ENCODE measurements at regions of chr15 and their contacts with region 1.

Region 1: DNA sequence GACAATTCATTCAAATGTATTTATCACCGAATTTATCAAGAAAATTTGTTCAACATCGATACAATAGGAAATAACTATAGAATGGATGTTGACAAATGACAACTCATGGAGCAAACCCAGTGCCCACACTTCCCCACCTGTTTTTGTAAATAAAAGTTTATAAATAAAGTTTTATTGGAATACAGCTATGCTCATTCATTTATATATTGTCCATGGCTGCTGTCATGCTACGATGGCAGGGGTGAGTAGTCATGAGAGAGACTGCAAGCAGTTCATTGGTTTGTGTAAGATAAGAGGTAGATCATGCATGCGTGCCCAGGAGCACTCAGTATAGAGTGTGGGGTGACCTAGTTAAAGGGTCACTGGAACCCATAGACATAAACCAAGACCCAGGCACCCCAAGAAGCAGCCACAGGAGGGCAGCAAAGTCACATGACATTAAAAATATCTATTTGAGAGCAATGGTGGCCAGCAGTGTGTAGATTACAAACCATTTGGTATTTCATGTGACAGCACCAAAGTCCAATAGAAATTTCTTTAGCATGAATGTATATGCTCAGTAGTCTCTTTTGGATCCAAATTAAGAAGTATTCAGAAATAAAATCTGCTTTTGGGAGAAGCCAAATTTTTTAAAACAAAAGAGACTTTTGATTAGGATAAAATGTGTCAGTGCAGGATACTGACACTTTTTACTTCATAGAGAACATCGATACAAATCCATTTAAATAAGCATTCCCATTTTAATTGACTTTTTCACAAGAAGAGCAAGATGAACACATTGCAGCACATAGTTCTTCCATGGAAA is 794.8 kb downstream of the MCTP2 start:
- DNase-seq: peak; percentile 33
- H3K4me3 ChIP-seq: no peak overlapping the region
- H3K27ac ChIP-seq: no peak overlapping the region
- H3K27me3 ChIP-seq: no peaks in the 10 kb centered on the region
- CTCF ChIP-seq: peak; percentile 85

Region 2: GRCh38 chr15:94804613-94805012 is 221.5 kb before region 1 on chr15:
- CTCF ChIA-PET with region 1: interaction called, 12 read pairs
- POLR2A ChIA-PET with region 1: no interaction called
- DNase-seq: no peak
- H3K4me3 ChIP-seq: no peak overlapping the region
- H3K27ac ChIP-seq: no peak overlapping the region
- H3K27me3 ChIP-seq: peaks cover 3% of the 10 kb centered on the region
- CTCF ChIP-seq: no peak

Region 3: DNA sequence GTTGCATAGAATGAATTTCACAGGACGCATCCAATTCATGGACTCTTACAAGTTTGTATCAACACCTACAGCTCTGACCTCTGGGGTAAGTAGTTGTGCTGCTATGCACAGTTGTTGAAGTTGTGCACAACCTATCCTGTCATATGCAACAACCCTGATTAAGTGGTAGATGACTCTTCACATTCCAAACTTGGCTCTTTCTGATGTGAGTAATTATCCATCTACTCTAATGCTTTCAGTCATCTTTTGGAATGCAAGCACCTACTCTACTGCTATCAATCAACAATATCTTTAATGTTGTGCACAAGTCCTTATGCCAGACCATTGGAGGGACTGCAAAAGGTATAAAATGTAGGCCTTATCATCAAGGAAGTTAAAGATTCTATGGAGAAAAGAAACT is 126.6 kb after region 1 on chr15:
- CTCF ChIA-PET with region 1: no interaction called
- POLR2A ChIA-PET with region 1: no interaction called
- DNase-seq: no peak
- H3K4me3 ChIP-seq: no peak overlapping the region
- H3K27ac ChIP-seq: no peak overlapping the region
- H3K27me3 ChIP-seq: no peaks in the 10 kb centered on the region
- CTCF ChIP-seq: no peak